Cardiac septum (tissue), 1 donor: ENCODE measurements at regions of chr15 and their contacts with region 1.

Region 1: GRCh38 chr15:40941528-40942336 is 11.5 kb upstream of the CHAC1 start:
- DNase-seq: peak; percentile 91

Region 2: GRCh38 chr15:40928821-40929659 is 12.7 kb before region 1 on chr15 and contains the start of gene DLL4:
- intact Hi-C with region 1: loop called (anchors 1 kb)
- DNase-seq: peak; percentile 84
- total RNA-seq, gene DLL4: 11.5 TPM

Region 3: GRCh38 chr15:41022487-41023090 is 80.9 kb after region 1 on chr15:
- intact Hi-C with region 1: loop called (anchors 2 kb)
- DNase-seq: no peak